ENCODE measurements at regions of chr6 and their contacts with region 1.

Region 1: DNA sequence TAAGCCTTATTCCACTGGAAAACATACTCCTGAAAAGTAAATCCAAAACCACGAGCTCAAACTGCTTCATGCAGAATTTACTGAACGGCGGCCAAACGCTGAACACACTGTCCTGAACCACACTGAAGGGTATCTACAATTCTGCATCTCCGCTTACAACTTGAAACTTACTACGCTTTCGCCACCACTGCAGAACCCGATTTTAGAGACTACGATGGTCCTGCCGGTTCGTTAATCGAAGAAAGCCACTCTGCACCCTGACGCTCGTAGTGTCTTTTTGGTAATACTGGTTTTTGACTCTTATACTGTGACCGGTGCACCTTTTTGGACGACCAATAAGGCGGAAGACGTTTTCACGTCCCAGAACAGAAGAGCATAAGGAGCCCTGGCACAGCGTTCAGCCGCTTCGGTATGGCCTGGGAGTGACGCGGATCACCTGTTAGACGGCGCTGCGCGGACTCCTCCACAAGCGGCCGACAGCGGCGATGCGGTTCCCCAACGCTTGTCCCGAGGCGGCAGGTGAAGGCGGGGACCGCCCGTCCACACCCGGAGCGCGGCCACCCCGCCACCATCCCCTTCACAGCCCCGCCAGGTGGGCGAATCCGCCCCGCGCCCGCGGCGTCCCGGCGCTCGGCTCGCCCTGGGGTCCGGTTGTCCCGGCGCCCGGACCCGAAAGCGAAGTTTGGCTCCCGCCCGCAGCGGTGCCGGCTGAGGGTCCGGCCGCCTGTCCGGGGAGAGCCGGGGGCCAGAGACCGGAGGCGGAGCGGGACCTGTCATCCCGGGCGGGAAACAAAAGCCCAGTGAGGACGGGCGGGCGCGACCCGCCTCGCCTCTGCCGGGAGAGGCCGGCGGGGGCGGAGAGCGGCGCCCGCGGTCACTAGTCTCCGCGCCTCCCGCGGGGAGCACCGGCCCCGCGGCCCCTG is 796 bp downstream of the FKBP5 start:
- DNase-seq: peak in 2 of 3 donors; percentile 46 to 56
- H3K4me3 ChIP-seq: peak overlapping the region; percentile 80 to 99 (median 94)
- H3K27ac ChIP-seq: peak overlapping the region in 1 of 2 experiments; percentile 77
- H3K4me1 ChIP-seq: peaks cover 4 to 38% (median 25%) of the 10 kb centered on the region in 4 experiments
- H3K27me3 ChIP-seq: no peaks in the 10 kb centered on the region

Region 2: DNA sequence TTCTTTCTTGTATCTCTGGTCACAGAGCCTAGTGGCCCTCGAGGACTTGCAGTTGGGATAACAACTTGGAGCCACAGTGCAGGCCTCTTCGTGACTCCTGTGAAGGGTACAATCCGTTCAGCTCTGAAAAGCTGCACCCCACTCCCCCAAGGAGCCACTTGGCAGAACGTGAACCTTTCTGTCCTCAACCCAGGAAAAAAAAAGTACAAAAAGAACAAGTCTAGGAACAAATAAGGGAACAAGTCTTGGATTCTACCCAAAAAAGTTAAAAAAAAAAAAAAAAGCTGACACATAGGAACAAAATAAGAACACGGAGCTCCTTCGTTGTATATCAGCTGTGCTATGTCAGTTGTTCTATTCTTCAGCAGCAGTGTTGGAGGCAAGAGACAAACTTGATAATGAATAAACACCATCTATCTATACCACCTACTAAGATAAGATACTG is 97.3 kb before region 1 on chr6:
- CTCF ChIA-PET with region 1: interaction called, 12 read pairs
- POLR2A ChIA-PET with region 1: no interaction called
- DNase-seq: no peak
- H3K4me3 ChIP-seq: no peak overlapping the region
- H3K27ac ChIP-seq: peak overlapping the region in 1 of 2 experiments; percentile 36
- H3K4me1 ChIP-seq: peaks cover 0 to 15% (median 5%) of the 10 kb centered on the region in 4 experiments
- H3K27me3 ChIP-seq: no peaks in the 10 kb centered on the region

Region 3: GRCh38 chr6:35669451-35670045 is 18.4 kb before region 1 on chr6:
- CTCF ChIA-PET with region 1: interaction called, 21 read pairs
- POLR2A ChIA-PET with region 1: no interaction called
- DNase-seq: peak in 2 of 3 donors; percentile 32 to 51
- H3K4me3 ChIP-seq: peak overlapping the region in 5 of 7 experiments; percentile 8 to 62 (median 52)
- H3K27ac ChIP-seq: peak overlapping the region; percentile 27 to 78
- H3K4me1 ChIP-seq: peaks cover 10 to 45% (median 23%) of the 10 kb centered on the region in 4 experiments
- H3K27me3 ChIP-seq: no peaks in the 10 kb centered on the region